Esophagus squamous epithelium (tissue), 5 donors: ENCODE measurements at regions of chr15 and their contacts with region 1.

Region 1: DNA sequence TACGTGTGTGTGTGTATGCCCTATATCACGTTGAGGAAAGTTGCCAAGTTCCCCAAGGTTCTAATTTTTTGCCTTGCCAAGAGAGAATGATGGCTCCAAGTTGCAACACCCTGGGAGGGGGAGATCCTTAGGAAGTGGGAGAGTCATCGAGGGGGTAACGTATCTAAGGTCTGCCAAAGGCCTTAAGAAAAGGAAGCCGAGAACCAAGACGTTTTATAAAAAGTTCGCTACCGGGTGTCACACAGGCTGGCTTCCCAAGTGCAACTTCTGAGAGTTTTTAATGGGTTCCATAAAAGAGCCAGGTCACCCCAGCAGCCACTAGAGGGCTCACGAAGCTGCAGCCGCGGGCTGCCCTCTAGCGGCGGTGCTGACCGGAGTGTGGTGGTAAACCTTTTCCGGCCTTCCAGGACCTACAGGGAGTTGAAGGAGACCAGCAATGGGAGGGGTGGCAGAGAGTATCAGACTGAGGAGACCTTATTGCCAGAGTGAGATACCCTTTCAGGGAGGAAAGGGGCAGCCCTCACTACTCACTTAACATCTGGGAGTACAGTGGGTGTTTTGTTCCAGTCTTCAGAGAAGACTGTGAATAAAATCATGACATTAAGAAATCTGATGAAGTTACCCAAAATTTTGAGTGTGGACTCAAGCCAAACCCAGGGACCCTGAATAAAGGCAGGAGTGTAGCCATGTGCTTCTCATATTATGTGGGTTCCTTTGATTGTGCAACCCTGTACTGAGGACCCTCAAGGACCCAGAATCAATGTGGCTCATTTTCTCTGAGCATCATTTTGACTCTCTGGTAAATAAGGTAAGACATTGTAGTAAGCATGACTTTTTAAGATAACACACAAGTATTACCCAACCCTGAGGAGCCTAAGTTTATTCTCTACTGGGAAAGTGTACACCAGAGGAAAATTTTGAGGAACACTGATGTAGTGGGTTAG is 2.5 kb upstream of the RFX7 start:
- DNase-seq: peak; percentile 28
- H3K4me3 ChIP-seq: peak overlapping the region; percentile 12 to 50 (median 40)
- H3K27ac ChIP-seq: peak overlapping the region; percentile 94 to 97 (median 96)
- H3K4me1 ChIP-seq: peaks cover 10 to 46% (median 14%) of the 10 kb centered on the region in 3 donors
- H3K27me3 ChIP-seq: no peaks in the 10 kb centered on the region
- CTCF ChIP-seq: peak; percentile 97 to 99 (median 99)
- POLR2A ChIP-seq: no peak

Region 2: GRCh38 chr15:56428821-56429458 is 182.8 kb after region 1 on chr15:
- intact Hi-C with region 1: loop called (anchors 5 kb)
- DNase-seq: no peak
- H3K4me3 ChIP-seq: no peak overlapping the region
- H3K27ac ChIP-seq: no peak overlapping the region
- H3K4me1 ChIP-seq: no peaks in the 10 kb centered on the region
- H3K27me3 ChIP-seq: no peaks in the 10 kb centered on the region
- CTCF ChIP-seq: peak; percentile 24 to 68 (median 44)
- POLR2A ChIP-seq: no peak